ENCODE measurements at regions of chr9 and their contacts with region 1.

Region 1: GRCh38 chr9:111298731-111299598 is 31.1 kb downstream of the OR2K2 start:
- DNase-seq: peak in 6 of 9 donors; percentile 1 to 42 (median 12)
- ATAC-seq: peak; percentile 60
- H3K4me3 ChIP-seq: no peak overlapping the region
- H3K4me3 Mint-ChIP-seq: no peak overlapping the region
- H3K27ac ChIP-seq: no peak overlapping the region
- H3K27ac Mint-ChIP-seq: no peak overlapping the region
- H3K4me1 ChIP-seq: no peaks in the 10 kb centered on the region
- H3K4me1 Mint-ChIP-seq: peaks cover 0 to 2% (median 0%) of the 10 kb centered on the region in 7 donors
- H3K27me3 ChIP-seq: no peaks in the 10 kb centered on the region
- H3K27me3 Mint-ChIP-seq: peaks cover 0 to 24% (median 9%) of the 10 kb centered on the region in 5 donors

Region 2: DNA sequence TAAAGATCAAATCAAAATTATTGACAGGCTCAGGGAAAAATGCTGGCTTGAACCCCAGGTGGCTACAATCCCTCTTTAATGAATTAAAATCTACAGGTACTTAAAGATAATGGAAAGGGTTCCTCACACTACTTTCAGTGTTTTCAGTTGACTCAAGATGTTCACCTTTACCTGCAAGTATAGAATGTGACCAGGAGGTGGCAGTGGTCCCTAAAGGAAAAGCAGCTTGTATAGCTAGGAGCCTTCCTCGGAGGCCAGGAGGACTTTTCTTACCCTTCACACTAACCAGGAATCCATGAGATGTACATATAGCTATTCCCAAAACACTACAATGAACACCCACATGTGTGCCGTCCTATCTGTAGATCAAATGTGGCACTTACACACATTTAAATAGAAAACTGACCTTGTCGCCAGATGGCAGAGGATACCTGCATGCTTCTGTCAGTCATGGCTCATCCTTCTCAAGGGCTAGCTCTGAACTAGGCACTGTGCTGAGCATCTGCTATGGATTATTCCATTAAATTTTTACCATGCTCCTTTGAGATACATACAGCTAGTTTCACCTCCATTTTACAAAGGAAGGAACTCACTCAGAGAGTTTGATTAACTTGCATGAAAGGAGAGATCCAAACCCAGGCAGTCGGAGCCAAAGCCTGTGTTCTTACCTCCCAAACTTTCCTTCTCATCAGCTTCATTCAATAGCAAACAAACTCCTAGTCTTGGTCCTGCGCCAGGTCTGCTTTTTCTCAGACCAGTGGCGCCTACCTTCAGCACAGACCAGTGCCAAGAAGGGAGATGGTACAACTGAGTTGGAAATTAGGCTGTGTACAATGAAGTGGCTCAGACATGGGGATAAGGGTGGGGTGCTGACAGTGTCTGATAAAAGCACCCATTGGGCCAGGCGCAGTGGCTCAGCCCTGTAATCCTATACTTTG is 1115.5 kb before region 1 on chr9:
- CTCF ChIA-PET with region 1: no interaction called
- POLR2A ChIA-PET with region 1: no interaction called
- intact Hi-C with region 1: loop called in 1 of 2 experiments (anchors 10 kb)
- DNase-seq: peak in 8 of 9 donors; percentile 10 to 58 (median 40)
- ATAC-seq: peak; percentile 71
- H3K4me3 ChIP-seq: no peak overlapping the region
- H3K4me3 Mint-ChIP-seq: no peak overlapping the region
- H3K27ac ChIP-seq: no peak overlapping the region
- H3K27ac Mint-ChIP-seq: no peak overlapping the region
- H3K4me1 ChIP-seq: no peaks in the 10 kb centered on the region
- H3K4me1 Mint-ChIP-seq: peaks cover 0 to 16% (median 0%) of the 10 kb centered on the region in 7 donors
- H3K27me3 ChIP-seq: no peaks in the 10 kb centered on the region
- H3K27me3 Mint-ChIP-seq: peaks cover 0 to 2% (median 0%) of the 10 kb centered on the region in 5 donors

Region 3: DNA sequence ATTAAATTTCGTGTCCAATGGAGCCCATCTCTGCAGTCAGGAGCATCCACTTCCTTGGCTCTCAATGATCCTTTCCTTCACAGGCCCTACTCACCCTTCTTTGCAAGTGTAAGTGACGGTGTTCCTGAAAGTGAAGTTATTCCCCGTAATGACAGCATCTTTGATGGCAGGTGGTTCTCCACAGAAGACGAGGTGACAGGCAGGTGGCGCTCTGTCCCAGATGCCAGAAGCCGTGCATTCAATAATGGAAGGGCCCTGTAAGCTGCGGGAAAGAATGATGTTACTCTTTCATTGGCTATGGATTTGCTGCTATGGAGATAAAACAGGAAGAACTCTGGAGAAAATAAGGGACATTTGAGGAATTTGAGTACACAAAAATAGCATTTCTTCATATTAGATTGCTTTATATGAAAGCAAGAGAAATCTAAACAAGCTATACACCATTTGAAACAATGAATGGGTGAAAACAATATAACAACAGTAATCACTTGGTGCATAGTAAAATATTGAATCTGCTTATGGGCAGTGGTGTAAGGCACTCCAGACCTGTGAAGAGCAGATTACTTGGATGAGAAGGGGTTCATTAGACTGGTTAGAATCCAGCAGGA is 871.4 kb before region 1 on chr9:
- CTCF ChIA-PET with region 1: no interaction called
- POLR2A ChIA-PET with region 1: no interaction called
- intact Hi-C with region 1: loop called in 1 of 2 experiments (anchors 2 kb)
- DNase-seq: no peak
- ATAC-seq: no peak
- H3K4me3 ChIP-seq: no peak overlapping the region
- H3K4me3 Mint-ChIP-seq: no peak overlapping the region
- H3K27ac ChIP-seq: no peak overlapping the region
- H3K27ac Mint-ChIP-seq: no peak overlapping the region
- H3K4me1 ChIP-seq: no peaks in the 10 kb centered on the region
- H3K4me1 Mint-ChIP-seq: no peaks in the 10 kb centered on the region
- H3K27me3 ChIP-seq: no peaks in the 10 kb centered on the region
- H3K27me3 Mint-ChIP-seq: peaks cover 0 to 6% (median 0%) of the 10 kb centered on the region in 5 donors

Region 4: DNA sequence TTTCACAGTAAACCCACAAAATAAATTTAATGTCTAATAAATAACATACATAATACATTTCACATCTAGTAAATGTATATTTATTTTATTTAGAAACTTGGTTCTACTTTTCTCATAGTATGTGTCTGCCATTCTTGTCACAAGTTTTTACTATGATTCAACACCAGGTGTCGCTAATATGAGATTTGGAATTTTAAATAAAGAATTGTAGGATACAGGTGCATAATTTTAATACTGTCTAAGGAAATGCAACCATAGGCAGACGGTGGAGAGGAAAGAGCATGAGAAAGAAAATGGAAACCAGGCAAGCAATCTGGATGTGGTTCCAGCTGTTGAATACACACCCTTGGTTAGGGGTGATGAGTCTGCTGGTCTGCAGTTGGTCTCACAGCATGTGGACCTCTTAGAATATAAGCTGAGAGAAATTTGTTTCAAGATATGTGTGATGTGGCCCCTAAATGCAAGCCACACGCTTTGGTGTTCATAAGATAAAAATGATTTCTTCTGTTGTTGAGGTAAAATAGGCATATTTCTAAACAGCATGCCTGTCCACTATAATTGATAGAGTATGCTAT is 846.7 kb before region 1 on chr9:
- CTCF ChIA-PET with region 1: no interaction called
- POLR2A ChIA-PET with region 1: no interaction called
- intact Hi-C with region 1: loop called in 1 of 2 experiments (anchors 2 kb)
- DNase-seq: no peak
- ATAC-seq: no peak
- H3K4me3 ChIP-seq: no peak overlapping the region
- H3K4me3 Mint-ChIP-seq: no peak overlapping the region
- H3K27ac ChIP-seq: no peak overlapping the region
- H3K27ac Mint-ChIP-seq: peak overlapping the region in 1 of 9 donors; percentile 76
- H3K4me1 ChIP-seq: no peaks in the 10 kb centered on the region
- H3K4me1 Mint-ChIP-seq: no peaks in the 10 kb centered on the region
- H3K27me3 ChIP-seq: no peaks in the 10 kb centered on the region
- H3K27me3 Mint-ChIP-seq: peaks cover 0 to 7% (median 0%) of the 10 kb centered on the region in 5 donors